Activated T-helper 2 cell treated with anti-CD3 and anti-CD28 coated beads, Interferon-gamma antibody, Interleukin-2, Interleukin-4, amounts not matched to agents 10 μg/mL and 5 μg/mL and 100 μg/mL, durations not matched to agents 14 hours and 24 hours and 36 hours (primary cell): ENCODE measurements at regions of chr19 and their contacts with region 1.

Region 1: DNA sequence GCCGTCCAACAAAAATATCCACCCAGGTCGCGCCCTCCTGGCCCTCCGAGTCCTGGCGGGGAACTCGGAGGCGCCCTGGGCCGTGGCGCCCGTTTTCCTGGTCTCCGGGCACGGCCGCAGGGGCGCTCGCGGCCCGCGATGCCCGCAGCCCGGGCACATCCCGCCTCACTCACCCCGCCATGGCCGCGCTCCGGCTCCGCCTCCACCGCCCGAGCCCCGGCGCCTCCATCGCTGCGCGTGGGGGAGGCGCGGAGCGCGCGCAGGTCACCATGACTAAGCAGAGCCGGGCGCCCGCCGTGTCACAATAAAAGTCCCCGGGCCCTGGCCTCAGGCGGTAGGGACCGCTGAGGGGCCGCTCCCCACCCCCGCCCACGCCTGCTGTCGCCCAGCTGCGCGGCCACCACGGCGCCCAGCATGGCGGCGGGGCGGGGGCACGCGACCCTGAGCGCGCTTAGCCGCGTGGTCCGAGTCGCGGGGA is 593 bp downstream of the KEAP1 start:
- DNase-seq: peak; percentile 92
- H3K4me3 Mint-ChIP-seq: peak overlapping the region; percentile 93
- H3K27ac Mint-ChIP-seq: peak overlapping the region; percentile 88
- H3K4me1 Mint-ChIP-seq: peaks cover 32% of the 10 kb centered on the region
- H3K27me3 Mint-ChIP-seq: no peaks in the 10 kb centered on the region

Region 2: GRCh38 chr19:10551698-10552301 is 49.2 kb after region 1 on chr19:
- intact Hi-C with region 1: loop called (anchors 5 kb)
- DNase-seq: no peak
- H3K4me3 Mint-ChIP-seq: no peak overlapping the region
- H3K27ac Mint-ChIP-seq: peak overlapping the region; percentile 49
- H3K4me1 Mint-ChIP-seq: peaks cover 36% of the 10 kb centered on the region
- H3K27me3 Mint-ChIP-seq: no peaks in the 10 kb centered on the region

Region 3: GRCh38 chr19:10612491-10613119 is 110.0 kb after region 1 on chr19:
- intact Hi-C with region 1: no loop called
- DNase-seq: no peak
- H3K4me3 Mint-ChIP-seq: no peak overlapping the region
- H3K27ac Mint-ChIP-seq: no peak overlapping the region
- H3K4me1 Mint-ChIP-seq: no peaks in the 10 kb centered on the region
- H3K27me3 Mint-ChIP-seq: no peaks in the 10 kb centered on the region

Region 4: DNA sequence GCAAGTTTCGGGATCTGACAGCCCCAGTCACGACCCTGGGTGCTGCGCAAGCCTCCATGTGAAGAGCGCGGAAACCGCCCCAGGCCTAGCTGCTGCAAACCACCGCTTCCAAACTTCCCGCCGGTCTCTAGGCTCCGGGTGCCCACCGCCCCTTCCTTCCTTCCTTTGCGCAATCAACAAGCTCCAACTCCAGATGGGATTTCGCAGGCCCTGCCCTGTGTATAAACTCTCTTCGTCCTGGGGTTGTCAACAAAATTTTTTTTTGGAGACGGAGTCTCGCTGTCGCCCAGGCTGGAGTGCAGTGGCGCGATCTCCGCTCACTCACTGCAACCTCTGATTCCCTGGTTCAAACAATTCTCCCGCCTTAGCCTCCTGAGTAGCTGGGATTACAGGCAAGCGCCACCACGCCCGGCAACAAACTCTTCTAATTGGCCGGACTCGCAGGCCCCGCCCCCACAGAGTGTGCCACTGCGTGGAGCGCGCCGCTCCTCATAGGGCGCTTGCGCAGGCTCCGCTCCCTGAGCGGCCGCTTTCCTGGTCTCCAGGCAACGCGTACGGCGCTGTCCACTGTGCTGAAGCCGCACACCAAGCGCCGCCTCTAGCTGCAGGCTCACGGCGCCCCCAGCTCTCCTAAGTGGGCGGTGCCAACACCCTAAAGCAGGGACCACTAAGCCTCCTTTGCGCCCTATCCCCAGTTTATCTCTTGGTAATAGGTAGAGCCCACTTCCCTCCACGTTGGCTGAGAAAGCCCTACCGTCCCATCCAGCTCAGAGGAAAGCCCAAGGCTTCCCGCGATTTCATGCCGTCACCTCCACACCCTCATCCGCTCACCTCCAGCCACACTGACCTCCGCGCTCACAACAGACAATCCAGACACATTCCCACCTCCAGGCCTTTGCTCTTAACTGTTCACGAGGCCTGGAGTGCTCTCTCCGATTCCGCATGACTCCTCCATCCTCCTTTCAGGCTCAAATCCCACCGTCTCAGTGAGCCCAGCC is 193.1 kb after region 1 on chr19:
- intact Hi-C with region 1: loop called (anchors 5 kb)
- DNase-seq: peak; percentile 90
- H3K4me3 Mint-ChIP-seq: peak overlapping the region; percentile 82
- H3K27ac Mint-ChIP-seq: no peak overlapping the region
- H3K4me1 Mint-ChIP-seq: peaks cover 8% of the 10 kb centered on the region
- H3K27me3 Mint-ChIP-seq: no peaks in the 10 kb centered on the region